HepG2 (cell line): ENCODE measurements at regions of chr13 and their contacts with region 1.

Region 1: GRCh38 chr13:51452361-51453206 is at the start of gene INTS6:
- DNase-seq: peak; percentile 98
- ATAC-seq: peak; percentile 75
- H3K4me3 ChIP-seq: peak within 1 kb of the TSS; percentile 93 to 99 (median 98)
- H3K27ac ChIP-seq: peak within 1 kb of the TSS; percentile 95
- H3K4me1 ChIP-seq: peaks cover 41% of the 10 kb centered on the region
- H3K27me3 ChIP-seq: no peaks in the 10 kb centered on the region; a peak in 1 of 5 replicates
- CTCF ChIP-seq: no peak
- EP300 ChIP-seq: no peak
- POLR2A ChIP-seq: peak; percentile 99 to 100
- RAD21 ChIP-seq: peak; percentile 57
- total RNA-seq, gene INTS6: 38.4 and 40.3 TPM in 2 replicates

Region 2: DNA sequence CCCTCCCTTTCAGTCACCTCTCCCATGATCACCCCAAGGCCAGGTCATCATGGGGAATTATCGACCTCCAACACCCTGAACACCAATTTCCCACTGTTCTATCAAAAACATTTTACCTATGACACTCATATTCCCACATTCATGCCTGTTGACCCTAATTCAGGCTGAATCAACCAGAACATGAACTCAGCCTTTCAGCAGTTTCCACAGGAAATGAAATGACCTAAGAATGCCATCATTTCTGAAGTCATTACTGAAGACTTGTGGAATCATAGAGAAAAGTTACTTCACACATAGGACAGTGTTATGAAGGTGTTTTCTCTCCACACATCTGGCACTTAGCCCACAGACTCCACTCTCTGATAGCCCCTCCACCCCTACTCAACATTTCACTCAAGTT is 260.2 kb before region 1 on chr13:
- CTCF ChIA-PET with region 1: no interaction called
- POLR2A ChIA-PET with region 1: no interaction called
- in situ Hi-C with region 1: no loop called
- intact Hi-C with region 1: no loop called
- DNase-seq: no peak
- ATAC-seq: no peak
- H3K4me3 ChIP-seq: no peak overlapping the region
- H3K27ac ChIP-seq: no peak overlapping the region
- H3K4me1 ChIP-seq: no peaks in the 10 kb centered on the region
- H3K27me3 ChIP-seq: peaks cover 0 to 11% of the 10 kb centered on the region in 2 experiments; a peak in 4 of 5 replicates
- CTCF ChIP-seq: no peak
- EP300 ChIP-seq: no peak
- POLR2A ChIP-seq: no peak
- RAD21 ChIP-seq: no peak

Region 3: GRCh38 chr13:51479199-51479523 is 26.6 kb after region 1 on chr13:
- CTCF ChIA-PET with region 1: no interaction called
- POLR2A ChIA-PET with region 1: interaction called, 55 read pairs
- in situ Hi-C with region 1: no loop called
- intact Hi-C with region 1: no loop called
- DNase-seq: peak; percentile 51
- ATAC-seq: peak; percentile 78
- H3K4me3 ChIP-seq: peak overlapping the region in 2 of 3 experiments; percentile 36 to 46; a peak in 3 of 6 replicates
- H3K27ac ChIP-seq: peak overlapping the region; percentile 51
- H3K4me1 ChIP-seq: peaks cover 50% of the 10 kb centered on the region
- H3K27me3 ChIP-seq: no peaks in the 10 kb centered on the region
- CTCF ChIP-seq: no peak
- EP300 ChIP-seq: no peak; a peak in 1 of 4 replicates
- POLR2A ChIP-seq: no peak
- RAD21 ChIP-seq: no peak

Region 4: GRCh38 chr13:51542346-51543242 is 90.0 kb after region 1 on chr13:
- CTCF ChIA-PET with region 1: no interaction called
- POLR2A ChIA-PET with region 1: interaction called, 19 read pairs
- in situ Hi-C with region 1: no loop called
- intact Hi-C with region 1: no loop called
- DNase-seq: no peak
- ATAC-seq: peak; percentile 89
- H3K4me3 ChIP-seq: peak overlapping the region in 2 of 3 experiments; percentile 23 to 29; a peak in 3 of 6 replicates
- H3K27ac ChIP-seq: no peak overlapping the region
- H3K4me1 ChIP-seq: peaks cover 34% of the 10 kb centered on the region
- H3K27me3 ChIP-seq: no peaks in the 10 kb centered on the region
- CTCF ChIP-seq: no peak
- EP300 ChIP-seq: no peak
- POLR2A ChIP-seq: no peak
- RAD21 ChIP-seq: no peak

Region 5: DNA sequence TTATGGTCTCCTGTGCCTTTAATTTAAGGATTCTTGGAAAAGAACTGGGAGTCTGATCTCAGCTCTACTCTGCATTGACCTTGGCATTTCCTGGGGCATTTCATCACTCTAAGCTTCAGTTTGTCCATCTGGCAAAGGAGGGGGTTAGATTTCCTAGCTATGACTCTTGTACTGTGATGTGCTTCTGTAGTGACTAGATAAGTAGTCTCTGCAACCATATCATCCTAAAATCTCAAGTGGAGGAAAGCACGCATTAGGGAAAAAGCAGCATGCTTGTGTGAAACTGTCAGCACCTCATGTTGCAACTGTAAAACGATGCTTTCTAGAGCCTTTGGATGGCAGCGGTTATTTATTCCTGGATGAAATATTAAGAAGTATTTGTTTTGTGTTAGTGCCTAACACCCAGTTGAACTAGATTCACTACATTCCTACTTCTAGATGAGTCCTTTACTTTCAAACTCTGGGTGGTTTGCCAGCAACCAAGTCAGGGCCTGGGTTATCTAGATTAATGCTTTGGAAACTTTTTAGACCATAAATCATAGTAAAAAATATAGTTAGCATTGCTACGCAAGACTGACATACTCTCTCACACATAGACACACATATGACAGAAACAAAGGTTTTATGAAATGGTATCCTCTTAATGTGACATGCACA is 138.5 kb after region 1 on chr13:
- CTCF ChIA-PET with region 1: no interaction called
- POLR2A ChIA-PET with region 1: interaction called, 32 read pairs
- in situ Hi-C with region 1: loop called (anchors 10 kb)
- intact Hi-C with region 1: no loop called
- DNase-seq: peak; percentile 63
- ATAC-seq: peak; percentile 81
- H3K4me3 ChIP-seq: no peak overlapping the region
- H3K27ac ChIP-seq: peak overlapping the region; percentile 5
- H3K4me1 ChIP-seq: peaks cover 82% of the 10 kb centered on the region
- H3K27me3 ChIP-seq: no peaks in the 10 kb centered on the region
- CTCF ChIP-seq: no peak
- EP300 ChIP-seq: no peak
- POLR2A ChIP-seq: no peak
- RAD21 ChIP-seq: no peak

Region 6: DNA sequence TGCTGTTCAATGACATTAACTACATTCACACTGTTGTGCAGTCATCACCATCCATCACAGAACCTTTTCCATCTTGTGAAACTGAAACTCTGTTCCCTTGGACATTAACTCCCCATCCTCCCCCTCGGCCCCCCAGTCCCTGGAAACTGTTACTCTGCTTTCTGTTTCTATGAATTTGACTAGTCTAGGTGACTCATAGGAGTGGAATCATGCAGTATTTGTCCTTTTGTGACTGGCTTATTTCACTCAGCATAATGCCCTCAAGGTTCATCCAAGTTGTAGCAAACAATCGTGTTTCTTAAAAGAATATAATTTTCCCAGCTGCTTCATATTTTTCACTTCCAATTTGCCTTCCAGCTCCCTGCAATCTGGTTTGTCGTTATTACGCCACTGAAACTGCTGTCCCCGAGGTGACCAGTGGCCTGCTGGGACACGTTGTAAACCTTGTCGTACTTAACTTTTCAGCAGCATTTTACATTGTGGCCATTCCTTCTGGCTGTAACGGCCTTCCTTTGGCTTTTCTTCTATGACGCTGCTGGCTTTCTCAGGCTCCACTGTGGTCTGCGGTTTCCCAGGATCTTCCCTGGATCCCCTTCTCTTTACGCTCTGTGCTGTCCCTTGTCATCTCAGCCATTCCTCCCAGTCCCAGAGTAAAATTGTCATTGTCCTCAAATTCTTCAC is 277.4 kb after region 1 on chr13:
- CTCF ChIA-PET with region 1: no interaction called
- POLR2A ChIA-PET with region 1: interaction called, 7 read pairs
- in situ Hi-C with region 1: no loop called
- intact Hi-C with region 1: loop called (anchors 1 kb)
- DNase-seq: peak; percentile 70
- ATAC-seq: peak; percentile 70
- H3K4me3 ChIP-seq: no peak overlapping the region
- H3K27ac ChIP-seq: peak overlapping the region; percentile 35
- H3K4me1 ChIP-seq: peaks cover 37% of the 10 kb centered on the region
- H3K27me3 ChIP-seq: no peaks in the 10 kb centered on the region
- CTCF ChIP-seq: no peak
- EP300 ChIP-seq: no peak
- POLR2A ChIP-seq: no peak
- RAD21 ChIP-seq: no peak

Region 7: DNA sequence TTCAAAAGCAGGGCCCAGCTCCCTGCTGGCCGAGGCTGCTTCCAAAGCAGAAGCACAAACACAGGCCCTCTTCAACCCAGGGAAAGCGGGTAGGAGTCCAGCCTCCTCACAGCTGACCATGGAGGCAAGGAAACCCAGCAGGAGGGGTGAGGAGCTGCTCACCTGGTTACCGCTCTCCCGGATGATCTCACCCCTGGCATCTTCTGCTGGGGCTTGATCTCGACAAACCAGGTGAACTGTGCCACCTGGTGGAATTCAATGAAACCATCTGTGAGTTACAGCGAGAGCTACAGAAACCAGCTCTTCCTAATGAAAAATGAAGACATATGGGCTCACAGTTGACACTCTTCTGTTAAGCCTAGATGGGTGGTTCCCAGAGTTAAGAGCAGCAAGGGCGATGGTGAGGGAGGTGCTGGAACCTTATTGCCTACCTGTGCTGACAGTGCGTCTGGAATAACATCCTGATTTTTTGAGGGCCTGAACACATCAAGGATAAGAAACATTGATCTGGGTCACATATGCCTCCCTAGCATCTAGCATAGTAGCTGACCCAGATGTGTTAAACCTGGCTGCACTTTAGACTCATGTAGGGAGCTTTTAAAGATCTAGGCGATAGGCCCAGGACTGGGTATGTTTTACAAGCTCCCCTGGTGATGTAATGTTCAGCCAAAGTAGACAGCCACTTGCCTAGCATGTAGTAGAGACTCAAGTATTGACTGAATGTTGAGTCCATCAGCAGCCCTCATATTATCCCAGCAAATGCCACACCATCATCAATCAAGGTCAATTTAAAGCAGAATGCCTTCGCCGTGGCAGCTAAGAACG is 345.3 kb after region 1 on chr13:
- CTCF ChIA-PET with region 1: no interaction called
- POLR2A ChIA-PET with region 1: interaction called, 19 read pairs
- in situ Hi-C with region 1: loop called (anchors 10 kb)
- intact Hi-C with region 1: loop called (anchors 2 kb)
- DNase-seq: peak; percentile 66
- ATAC-seq: peak; percentile 84
- H3K4me3 ChIP-seq: no peak overlapping the region
- H3K27ac ChIP-seq: no peak overlapping the region
- H3K4me1 ChIP-seq: peaks cover 33% of the 10 kb centered on the region
- H3K27me3 ChIP-seq: no peaks in the 10 kb centered on the region
- CTCF ChIP-seq: peak; percentile 84
- EP300 ChIP-seq: no peak
- POLR2A ChIP-seq: no peak
- RAD21 ChIP-seq: peak; percentile 82